K562 (cell line): ENCODE measurements at regions of chr3 and their contacts with region 1.

Region 1: GRCh38 chr3:31531992-31532586 is 636 bp upstream of the STT3B start:
- DNase-seq: peak; percentile 97 to 100 (median 98)
- ATAC-seq: peak; percentile 89
- H3K4me3 ChIP-seq: peak overlapping the region; percentile 83
- H3K27ac ChIP-seq: peak overlapping the region; percentile 97
- H3K4me1 ChIP-seq: peaks cover 23 to 28% of the 10 kb centered on the region in 2 experiments
- H3K27me3 ChIP-seq: no peaks in the 10 kb centered on the region
- CTCF ChIP-seq: no peak
- EP300 ChIP-seq: peak; percentile 69
- POLR2A ChIP-seq: peak; percentile 99
- RAD21 ChIP-seq: peak in 1 of 2 experiments; percentile 46; a peak in 3 of 4 replicates

Region 2: DNA sequence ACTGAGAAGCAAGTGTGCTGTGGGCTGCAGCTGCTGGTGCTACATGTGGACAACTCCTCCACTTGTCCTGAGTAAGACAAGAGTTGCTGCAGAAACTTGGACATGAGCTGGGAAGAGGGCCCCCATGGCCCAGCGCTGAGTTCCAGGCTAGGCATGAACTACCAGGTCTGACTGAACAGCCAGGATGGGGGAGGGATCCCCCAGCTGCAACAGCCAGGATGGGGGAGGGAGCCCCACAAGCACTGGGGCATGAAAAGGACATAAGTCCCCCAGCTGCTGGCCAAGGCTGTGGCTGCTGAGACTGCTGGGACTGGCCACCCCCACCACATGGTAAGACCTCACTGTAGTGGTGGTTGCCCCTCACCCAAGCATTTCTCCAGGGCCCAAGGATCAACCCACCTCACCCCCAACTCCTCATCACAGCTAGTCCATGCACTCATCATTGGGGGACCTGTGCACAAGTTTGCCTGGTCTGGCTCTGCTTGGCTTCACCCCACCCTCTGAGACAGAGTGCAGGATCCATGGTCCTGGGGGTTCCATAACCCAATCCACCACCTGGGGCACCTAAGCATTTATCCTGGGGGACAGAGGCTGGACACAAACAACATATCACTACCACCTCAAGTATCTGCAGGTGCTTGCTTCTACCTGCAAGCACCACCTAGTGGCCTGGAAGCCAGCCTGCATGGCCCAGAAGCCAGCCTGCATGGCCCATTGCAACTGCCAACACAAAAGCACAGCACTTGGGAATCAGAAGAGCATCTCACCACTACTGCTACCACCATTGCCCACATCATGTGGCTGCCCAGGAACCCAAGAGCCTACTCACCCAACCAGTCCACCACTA is 83.8 kb before region 1 on chr3:
- CTCF ChIA-PET with region 1: no interaction called
- POLR2A ChIA-PET with region 1: interaction called, 3 read pairs
- in situ Hi-C with region 1: no loop called
- intact Hi-C with region 1: loop called (anchors 5 kb)
- DNase-seq: peak in 2 of 4 experiments; percentile 15 to 49
- ATAC-seq: peak; percentile 80
- H3K4me3 ChIP-seq: no peak overlapping the region
- H3K27ac ChIP-seq: no peak overlapping the region
- H3K4me1 ChIP-seq: peaks cover 0 to under 1% of the 10 kb centered on the region in 2 experiments; a peak in 1 of 5 replicates
- H3K27me3 ChIP-seq: peaks cover 7 to 11% of the 10 kb centered on the region in 2 experiments
- CTCF ChIP-seq: peak; percentile 61 to 68 (median 68)
- EP300 ChIP-seq: no peak
- POLR2A ChIP-seq: no peak
- RAD21 ChIP-seq: peak in 1 of 2 experiments; percentile 66; a peak in 2 of 4 replicates

Region 3: DNA sequence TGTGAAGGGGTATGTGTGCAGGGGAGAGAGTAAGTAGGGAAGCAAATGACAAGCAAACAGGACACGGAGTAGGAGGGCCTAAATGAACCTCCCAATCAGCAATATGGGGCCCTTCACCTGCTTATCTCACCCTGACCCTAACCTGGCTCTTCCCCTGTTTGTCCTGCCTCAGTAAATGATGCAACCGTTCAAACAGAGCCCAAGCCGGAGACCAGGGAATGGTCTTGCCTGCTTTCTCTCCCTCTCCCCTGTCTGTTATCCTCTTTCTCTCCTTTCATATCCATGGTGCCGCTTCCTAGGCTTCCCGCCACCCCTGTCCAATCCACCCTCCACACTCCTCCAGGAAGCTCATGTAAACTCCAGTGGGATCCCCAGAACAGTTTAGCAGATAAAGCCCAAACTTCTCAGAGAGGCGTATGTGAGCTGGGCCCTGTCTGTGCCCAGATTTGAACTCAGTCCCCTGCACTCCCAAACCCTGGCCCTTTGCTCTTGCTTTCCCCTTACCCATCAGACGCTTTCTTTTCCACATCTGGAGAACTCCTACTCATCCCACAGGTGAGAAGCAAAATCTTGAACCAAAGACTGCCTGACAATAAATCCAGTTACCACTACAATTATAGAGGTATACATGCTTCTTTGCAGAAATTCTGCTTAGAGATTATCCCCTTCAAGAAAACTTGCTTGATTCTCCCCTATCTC is 45.1 kb before region 1 on chr3:
- CTCF ChIA-PET with region 1: no interaction called
- POLR2A ChIA-PET with region 1: interaction called, 3 read pairs
- in situ Hi-C with region 1: no loop called
- intact Hi-C with region 1: loop called (anchors 2 kb)
- DNase-seq: peak in 2 of 4 experiments; percentile 54 to 74
- ATAC-seq: peak; percentile 89
- H3K4me3 ChIP-seq: no peak overlapping the region
- H3K27ac ChIP-seq: peak overlapping the region; percentile 31; the same call in 2 of the 3 replicates
- H3K4me1 ChIP-seq: peaks cover 7 to 27% of the 10 kb centered on the region in 2 experiments; a peak in 3 of 5 replicates
- H3K27me3 ChIP-seq: no peaks in the 10 kb centered on the region
- CTCF ChIP-seq: no peak
- EP300 ChIP-seq: peak; percentile 74
- POLR2A ChIP-seq: no peak
- RAD21 ChIP-seq: no peak

Region 4: DNA sequence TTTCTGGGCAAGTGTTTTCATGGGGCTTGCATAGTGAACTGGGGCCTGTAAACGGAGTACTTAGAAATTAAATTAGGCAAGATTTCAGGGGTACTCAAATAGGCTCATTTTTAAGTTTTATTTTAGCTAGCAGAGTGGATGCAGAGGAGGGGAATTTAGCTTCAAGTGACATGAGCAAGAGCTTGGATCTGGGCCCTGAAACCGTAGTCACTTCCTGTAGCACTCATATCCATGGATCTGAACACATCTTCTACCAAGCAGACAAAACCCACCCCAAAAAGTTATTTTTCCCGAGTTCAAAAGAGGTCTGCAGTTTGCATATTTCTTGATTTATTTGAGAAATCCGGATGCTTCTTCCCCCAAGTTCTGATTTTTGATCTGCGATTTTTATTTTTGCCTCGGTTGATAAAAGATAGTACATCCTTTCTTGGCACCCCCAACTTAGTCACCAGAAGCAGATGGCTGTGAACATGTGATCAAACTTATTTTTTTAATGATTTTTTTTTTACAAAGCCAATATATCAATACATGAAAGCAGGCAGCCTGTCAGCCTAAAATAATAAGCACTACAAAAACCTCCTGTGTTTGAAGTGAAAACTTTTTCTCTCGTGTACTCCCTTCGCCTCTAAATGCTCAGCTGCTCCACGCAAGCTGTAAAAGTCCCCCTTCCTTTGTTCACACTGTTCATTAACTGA is 36.0 kb before region 1 on chr3:
- CTCF ChIA-PET with region 1: no interaction called
- POLR2A ChIA-PET with region 1: interaction called, 10 read pairs
- in situ Hi-C with region 1: no loop called
- intact Hi-C with region 1: no loop called
- DNase-seq: no peak
- ATAC-seq: no peak
- H3K4me3 ChIP-seq: no peak overlapping the region
- H3K27ac ChIP-seq: no peak overlapping the region
- H3K4me1 ChIP-seq: peaks cover 4 to 11% of the 10 kb centered on the region in 2 experiments; a peak in 3 of 5 replicates
- H3K27me3 ChIP-seq: peaks cover 4 to 5% of the 10 kb centered on the region in 2 experiments; a peak in 2 of 5 replicates
- CTCF ChIP-seq: no peak
- EP300 ChIP-seq: no peak
- POLR2A ChIP-seq: no peak
- RAD21 ChIP-seq: no peak

Region 5: DNA sequence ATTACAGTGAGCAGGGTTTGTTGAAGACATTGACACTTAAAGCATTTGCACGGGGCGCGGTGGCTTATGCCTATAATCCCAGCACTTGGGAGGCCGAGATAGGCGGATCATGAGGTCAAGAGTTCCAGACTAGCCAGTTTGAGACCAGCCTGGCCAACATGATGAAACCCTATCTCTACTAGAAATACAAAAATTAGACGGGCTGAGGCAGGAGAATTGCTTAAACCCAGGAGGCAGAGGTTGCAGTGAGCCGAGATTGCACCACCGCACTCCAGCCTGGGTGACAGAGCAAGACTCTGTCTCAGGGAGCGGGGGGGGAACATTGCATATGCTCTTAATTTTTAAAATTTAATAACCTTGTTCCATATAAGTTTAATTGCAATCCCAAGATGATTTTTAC is 12.5 kb after region 1 on chr3:
- CTCF ChIA-PET with region 1: no interaction called
- POLR2A ChIA-PET with region 1: interaction called, 25 read pairs
- in situ Hi-C with region 1: no loop called
- intact Hi-C with region 1: no loop called
- DNase-seq: peak in 1 of 4 experiments; percentile 81
- ATAC-seq: peak; percentile 90
- H3K4me3 ChIP-seq: no peak overlapping the region
- H3K27ac ChIP-seq: no peak overlapping the region
- H3K4me1 ChIP-seq: peaks cover 4 to 7% of the 10 kb centered on the region in 2 experiments; a peak in 3 of 5 replicates
- H3K27me3 ChIP-seq: no peaks in the 10 kb centered on the region
- CTCF ChIP-seq: no peak
- EP300 ChIP-seq: no peak; the same call in 1 of the 2 replicates
- POLR2A ChIP-seq: no peak
- RAD21 ChIP-seq: no peak

Region 6: GRCh38 chr3:31695280-31696008 is 163.4 kb after region 1 on chr3:
- CTCF ChIA-PET with region 1: no interaction called
- POLR2A ChIA-PET with region 1: no interaction called
- in situ Hi-C with region 1: no loop called
- intact Hi-C with region 1: loop called (anchors 5 kb)
- DNase-seq: peak in 2 of 4 experiments; percentile 16 to 22
- ATAC-seq: peak; percentile 73
- H3K4me3 ChIP-seq: no peak overlapping the region
- H3K27ac ChIP-seq: no peak overlapping the region
- H3K4me1 ChIP-seq: no peaks in the 10 kb centered on the region
- H3K27me3 ChIP-seq: no peaks in the 10 kb centered on the region; a peak in 1 of 5 replicates
- CTCF ChIP-seq: peak; percentile 2 to 44 (median 38); a peak in 4 of 6 replicates
- EP300 ChIP-seq: no peak
- POLR2A ChIP-seq: no peak
- RAD21 ChIP-seq: peak; percentile 33 to 41; a peak in 3 of 4 replicates